ENCODE measurements at regions of chr11 and their contacts with region 1.

Region 1: GRCh38 chr11:126716456-126717083 is 284.0 kb downstream of the KIRREL3 start:
- DNase-seq: no peak
- ATAC-seq: peak; percentile 90
- H3K4me3 ChIP-seq: no peak overlapping the region
- H3K27ac ChIP-seq: no peak overlapping the region
- H3K4me1 ChIP-seq: no peaks in the 10 kb centered on the region
- H3K27me3 ChIP-seq: peaks cover 3 to 16% of the 10 kb centered on the region in 2 experiments
- CTCF ChIP-seq: peak; percentile 76 to 80 (median 79)
- EP300 ChIP-seq: no peak
- POLR2A ChIP-seq: no peak
- RAD21 ChIP-seq: peak; percentile 86

Region 2: DNA sequence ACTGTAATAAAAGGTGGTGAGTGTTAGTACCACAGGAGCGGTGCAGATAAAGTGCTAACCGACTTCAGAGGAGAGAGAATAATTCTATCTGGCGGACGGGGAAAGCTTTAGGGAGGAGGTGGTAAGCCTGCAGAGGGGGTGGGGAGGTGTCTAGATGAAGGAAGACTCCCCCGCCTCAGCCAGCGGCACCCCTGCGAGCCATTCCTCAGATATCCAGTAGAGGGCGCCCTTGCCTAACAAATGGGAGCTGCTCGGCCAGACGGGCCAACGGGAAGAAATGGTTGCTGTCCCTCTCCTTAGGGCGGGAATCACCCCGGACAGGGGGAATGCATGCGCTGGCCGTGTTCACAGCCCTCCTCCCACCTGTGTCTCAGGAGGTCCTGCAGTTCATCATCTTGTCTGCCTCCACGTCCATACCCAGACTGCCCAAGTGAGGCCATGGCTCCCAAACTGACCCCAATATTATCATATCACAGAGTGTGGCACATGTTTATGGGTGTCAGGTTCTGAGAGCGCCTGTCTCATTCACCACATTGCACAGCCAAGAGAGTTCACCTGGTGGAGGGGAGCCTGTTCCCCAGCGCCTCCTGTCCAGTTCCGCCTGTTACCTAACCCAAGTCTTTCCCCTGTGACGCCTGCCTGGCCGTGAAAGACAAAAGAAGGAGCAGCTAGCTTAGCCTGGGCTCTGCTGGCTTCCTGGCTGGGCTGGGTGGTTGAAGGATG is 275.6 kb before region 1 on chr11:
- CTCF ChIA-PET with region 1: no interaction called
- POLR2A ChIA-PET with region 1: no interaction called
- RAD21 ChIA-PET with region 1: interaction called, 3 read pairs
- SMC1A ChIA-PET with region 1: no interaction called
- in situ Hi-C with region 1: no loop called
- intact Hi-C with region 1: loop called (anchors 5 kb)
- DNase-seq: no peak
- ATAC-seq: peak; percentile 92
- H3K4me3 ChIP-seq: no peak overlapping the region
- H3K27ac ChIP-seq: no peak overlapping the region
- H3K4me1 ChIP-seq: no peaks in the 10 kb centered on the region
- H3K27me3 ChIP-seq: no peaks in the 10 kb centered on the region; a peak in 1 of 4 replicates
- CTCF ChIP-seq: peak; percentile 90 to 93 (median 92); a peak in 5 of 6 replicates
- EP300 ChIP-seq: no peak
- POLR2A ChIP-seq: no peak
- RAD21 ChIP-seq: peak; percentile 94

Region 3: GRCh38 chr11:126687477-126687876 is 29.1 kb before region 1 on chr11:
- CTCF ChIA-PET with region 1: no interaction called
- POLR2A ChIA-PET with region 1: no interaction called
- RAD21 ChIA-PET with region 1: no interaction called
- SMC1A ChIA-PET with region 1: no interaction called
- in situ Hi-C with region 1: no loop called
- intact Hi-C with region 1: no loop called
- DNase-seq: no peak
- ATAC-seq: no peak
- H3K4me3 ChIP-seq: no peak overlapping the region
- H3K27ac ChIP-seq: no peak overlapping the region
- H3K4me1 ChIP-seq: no peaks in the 10 kb centered on the region
- H3K27me3 ChIP-seq: no peaks in the 10 kb centered on the region; a peak in 2 of 4 replicates
- CTCF ChIP-seq: no peak
- EP300 ChIP-seq: no peak
- POLR2A ChIP-seq: no peak
- RAD21 ChIP-seq: no peak

Region 4: GRCh38 chr11:126700773-126701519 is 15.6 kb before region 1 on chr11:
- CTCF ChIA-PET with region 1: interaction called, 22 read pairs
- POLR2A ChIA-PET with region 1: no interaction called
- RAD21 ChIA-PET with region 1: no interaction called
- SMC1A ChIA-PET with region 1: interaction called, 3 read pairs
- in situ Hi-C with region 1: no loop called
- intact Hi-C with region 1: no loop called
- DNase-seq: peak; percentile 42
- ATAC-seq: peak; percentile 88
- H3K4me3 ChIP-seq: no peak overlapping the region
- H3K27ac ChIP-seq: no peak overlapping the region; the same call in 1 of the 2 replicates
- H3K4me1 ChIP-seq: peaks cover 16% of the 10 kb centered on the region
- H3K27me3 ChIP-seq: no peaks in the 10 kb centered on the region; a peak in 1 of 4 replicates
- CTCF ChIP-seq: no peak
- EP300 ChIP-seq: peak; percentile 94 to 96; a peak in 3 of 4 replicates
- POLR2A ChIP-seq: no peak
- RAD21 ChIP-seq: no peak

Region 5: DNA sequence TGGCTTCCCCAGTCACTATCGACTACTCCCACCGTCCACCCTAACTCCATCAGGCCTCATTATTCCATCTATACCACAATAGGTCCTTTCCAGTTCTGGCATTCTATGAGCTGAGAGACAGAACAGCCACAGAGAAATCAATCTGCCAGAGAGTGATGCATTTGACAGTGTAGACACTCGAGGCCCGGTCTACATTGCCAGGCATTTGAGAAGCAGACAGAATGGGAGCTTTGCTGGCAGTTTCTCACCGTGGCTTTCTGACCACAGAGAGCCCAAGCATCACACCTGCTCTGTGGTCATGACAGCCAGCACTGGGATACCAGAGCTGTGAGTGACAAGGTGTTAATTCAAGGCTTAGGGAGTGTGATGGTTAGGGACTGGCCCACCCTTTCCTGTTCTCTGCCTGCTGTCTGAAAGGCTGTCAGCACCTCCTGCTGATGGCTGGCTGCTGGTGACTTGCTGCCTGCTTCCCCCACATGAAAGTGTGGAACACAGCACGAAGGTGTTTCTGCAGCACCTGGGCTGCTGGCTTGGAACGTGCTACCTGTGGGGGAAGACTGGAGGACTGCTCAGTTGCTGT is 146.2 kb after region 1 on chr11:
- CTCF ChIA-PET with region 1: interaction called, 3 read pairs
- POLR2A ChIA-PET with region 1: no interaction called
- RAD21 ChIA-PET with region 1: no interaction called
- SMC1A ChIA-PET with region 1: no interaction called
- in situ Hi-C with region 1: no loop called
- intact Hi-C with region 1: loop called (anchors 1 kb)
- DNase-seq: no peak
- ATAC-seq: peak; percentile 80
- H3K4me3 ChIP-seq: no peak overlapping the region
- H3K27ac ChIP-seq: no peak overlapping the region
- H3K4me1 ChIP-seq: peaks cover 5% of the 10 kb centered on the region
- H3K27me3 ChIP-seq: peaks cover 0 to 4% of the 10 kb centered on the region in 2 experiments; a peak in 2 of 4 replicates
- CTCF ChIP-seq: peak in 2 of 3 experiments; percentile 32 to 39; a peak in 3 of 6 replicates
- EP300 ChIP-seq: no peak
- POLR2A ChIP-seq: no peak
- RAD21 ChIP-seq: peak; percentile 34; the same call in 1 of the 2 replicates

Region 6: GRCh38 chr11:127074151-127074761 is 357.7 kb after region 1 on chr11:
- CTCF ChIA-PET with region 1: interaction called, 51 read pairs
- POLR2A ChIA-PET with region 1: no interaction called
- RAD21 ChIA-PET with region 1: interaction called, 11 read pairs
- SMC1A ChIA-PET with region 1: interaction called, 18 read pairs
- in situ Hi-C with region 1: loop called (anchors 10 kb)
- intact Hi-C with region 1: loop called (anchors 1 kb)
- DNase-seq: peak; percentile 76
- ATAC-seq: peak; percentile 97
- H3K4me3 ChIP-seq: no peak overlapping the region
- H3K27ac ChIP-seq: no peak overlapping the region
- H3K4me1 ChIP-seq: peaks cover 12% of the 10 kb centered on the region
- H3K27me3 ChIP-seq: no peaks in the 10 kb centered on the region; a peak in 2 of 4 replicates
- CTCF ChIP-seq: peak; percentile 60 to 82 (median 64)
- EP300 ChIP-seq: peak; percentile 64 to 65
- POLR2A ChIP-seq: no peak
- RAD21 ChIP-seq: peak; percentile 75

Measured in GM12878 (cell line).